Lower lobe of right lung (tissue), 2 donors: ENCODE measurements at regions of chr1 and their contacts with region 1.

Region 1: DNA sequence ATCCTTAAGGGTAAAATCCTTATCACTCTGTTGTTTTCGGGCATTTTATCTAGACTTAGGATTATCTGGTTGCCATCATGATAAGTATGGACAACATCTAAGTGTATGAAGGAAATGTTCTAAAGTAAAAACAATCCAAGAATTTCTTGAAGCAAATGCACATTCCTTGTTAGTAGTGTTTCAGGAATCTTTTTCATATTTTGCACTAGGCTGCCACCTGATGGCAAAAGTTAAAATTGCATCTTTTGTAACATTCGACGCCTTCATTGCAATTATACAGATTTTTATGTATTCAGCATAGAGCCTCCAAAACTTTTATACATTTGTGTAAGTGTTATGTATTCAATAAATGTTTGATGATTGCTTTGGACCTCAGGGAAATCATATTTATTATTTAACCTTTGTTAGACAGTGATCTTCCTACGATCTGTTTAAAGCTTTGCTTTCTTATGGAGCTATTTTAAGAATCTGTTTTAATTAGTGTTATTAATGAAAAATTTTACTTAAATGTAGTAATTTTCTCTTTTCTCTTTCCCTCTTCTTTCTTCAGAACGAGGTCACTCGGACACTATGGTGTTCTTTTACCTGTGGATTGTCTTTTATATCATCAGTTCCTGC is 49.4 kb upstream of the KIAA1614 start:
- DNase-seq: no peak
- ATAC-seq: peak in 1 of 2 donors; percentile 45
- H3K4me3 ChIP-seq: no peak overlapping the region
- H3K27ac ChIP-seq: no peak overlapping the region
- H3K4me1 ChIP-seq: peaks cover 8% of the 10 kb centered on the region
- H3K27me3 ChIP-seq: no peaks in the 10 kb centered on the region
- CTCF ChIP-seq: peak; percentile 77

Region 2: DNA sequence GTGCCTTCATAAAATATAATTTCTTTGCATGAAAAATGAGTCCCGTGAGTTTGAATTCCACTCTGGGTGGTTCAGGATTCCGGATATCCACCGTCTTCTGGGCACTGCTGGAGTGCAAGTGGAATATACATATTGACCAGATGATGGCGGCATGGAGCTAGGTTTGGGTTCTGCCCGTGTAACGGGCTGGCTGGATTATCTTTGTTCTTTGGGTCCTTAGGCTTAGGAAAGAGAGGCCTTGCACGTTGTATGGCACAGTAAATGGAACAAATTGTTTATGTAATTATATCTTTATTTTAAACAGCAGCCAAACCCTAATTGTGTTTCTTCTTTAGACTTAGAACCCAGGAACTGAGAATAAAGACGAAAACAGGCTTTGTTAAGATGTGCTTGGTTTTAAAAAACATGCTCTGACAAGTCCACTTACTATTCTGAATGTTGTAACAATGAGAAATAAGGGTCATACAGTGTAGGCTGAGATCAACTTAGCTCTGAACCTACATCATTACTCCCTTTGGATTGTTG is 347.3 kb before region 1 on chr1:
- intact Hi-C with region 1: loop called (anchors 5 kb)
- DNase-seq: peak; percentile 57
- ATAC-seq: peak; percentile 95 to 97
- H3K4me3 ChIP-seq: no peak overlapping the region
- H3K27ac ChIP-seq: no peak overlapping the region
- H3K4me1 ChIP-seq: no peaks in the 10 kb centered on the region
- H3K27me3 ChIP-seq: no peaks in the 10 kb centered on the region
- CTCF ChIP-seq: peak; percentile 87

Region 3: DNA sequence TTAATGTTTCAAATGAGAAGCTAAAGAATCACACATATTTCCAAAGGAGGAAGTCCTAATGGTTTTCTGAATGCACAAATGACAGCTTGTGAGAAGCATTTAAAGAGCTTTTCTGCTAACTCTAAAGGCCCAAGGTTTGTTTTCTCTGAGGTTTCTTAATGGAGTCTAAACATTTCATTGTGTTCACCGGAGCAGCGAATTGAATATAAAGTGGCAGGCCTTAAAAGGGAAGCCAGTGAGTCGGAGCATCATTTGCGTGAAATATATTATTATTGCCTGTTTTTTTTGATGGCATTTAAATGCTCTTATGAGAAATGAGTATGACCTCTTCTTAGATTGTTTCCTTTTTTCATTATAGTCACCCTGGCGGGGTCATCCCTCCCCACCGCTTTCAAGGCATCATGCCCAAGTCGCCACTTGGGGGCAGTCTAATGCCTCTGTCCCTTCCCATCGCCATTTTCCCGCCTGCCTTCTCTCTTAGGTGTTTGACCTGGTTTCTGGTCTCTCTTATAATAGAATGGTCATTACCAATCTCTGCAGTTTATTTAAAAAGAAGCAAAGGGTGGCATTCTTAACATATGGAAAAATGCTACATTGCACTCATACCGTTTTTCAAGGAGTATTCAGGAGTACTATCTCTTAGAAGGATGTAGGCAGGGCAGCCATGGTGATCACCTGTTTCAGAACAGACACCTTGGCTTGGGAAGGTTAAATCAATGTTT is 329.8 kb before region 1 on chr1:
- intact Hi-C with region 1: loop called (anchors 5 kb)
- DNase-seq: peak; percentile 73
- ATAC-seq: peak; percentile 66 to 71
- H3K4me3 ChIP-seq: no peak overlapping the region
- H3K27ac ChIP-seq: no peak overlapping the region
- H3K4me1 ChIP-seq: peaks cover 37% of the 10 kb centered on the region
- H3K27me3 ChIP-seq: no peaks in the 10 kb centered on the region
- CTCF ChIP-seq: peak; percentile 89